ENCODE measurements at regions of chr14 and their contacts with region 1.

Region 1: DNA sequence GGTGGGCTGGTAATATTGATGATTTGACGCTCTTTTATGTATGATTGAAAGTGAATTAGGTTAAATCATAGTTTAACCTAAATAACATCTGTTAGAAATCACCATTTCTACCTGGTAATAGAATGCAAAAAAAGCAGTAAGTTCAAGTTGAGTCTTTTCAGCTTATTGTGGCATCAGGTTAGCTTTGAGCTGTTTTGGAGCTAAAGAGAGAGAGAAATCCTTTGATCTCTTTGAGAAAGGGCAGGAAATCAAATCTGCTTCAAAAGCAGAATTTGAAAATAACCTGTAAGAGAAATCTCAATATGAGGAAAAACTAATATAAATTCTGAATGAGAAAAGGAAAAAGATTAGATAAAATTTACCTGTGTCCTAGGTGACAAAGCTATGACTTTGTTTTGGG is 62.2 kb downstream of the CKB start:
- DNase-seq: no peak

Region 2: DNA sequence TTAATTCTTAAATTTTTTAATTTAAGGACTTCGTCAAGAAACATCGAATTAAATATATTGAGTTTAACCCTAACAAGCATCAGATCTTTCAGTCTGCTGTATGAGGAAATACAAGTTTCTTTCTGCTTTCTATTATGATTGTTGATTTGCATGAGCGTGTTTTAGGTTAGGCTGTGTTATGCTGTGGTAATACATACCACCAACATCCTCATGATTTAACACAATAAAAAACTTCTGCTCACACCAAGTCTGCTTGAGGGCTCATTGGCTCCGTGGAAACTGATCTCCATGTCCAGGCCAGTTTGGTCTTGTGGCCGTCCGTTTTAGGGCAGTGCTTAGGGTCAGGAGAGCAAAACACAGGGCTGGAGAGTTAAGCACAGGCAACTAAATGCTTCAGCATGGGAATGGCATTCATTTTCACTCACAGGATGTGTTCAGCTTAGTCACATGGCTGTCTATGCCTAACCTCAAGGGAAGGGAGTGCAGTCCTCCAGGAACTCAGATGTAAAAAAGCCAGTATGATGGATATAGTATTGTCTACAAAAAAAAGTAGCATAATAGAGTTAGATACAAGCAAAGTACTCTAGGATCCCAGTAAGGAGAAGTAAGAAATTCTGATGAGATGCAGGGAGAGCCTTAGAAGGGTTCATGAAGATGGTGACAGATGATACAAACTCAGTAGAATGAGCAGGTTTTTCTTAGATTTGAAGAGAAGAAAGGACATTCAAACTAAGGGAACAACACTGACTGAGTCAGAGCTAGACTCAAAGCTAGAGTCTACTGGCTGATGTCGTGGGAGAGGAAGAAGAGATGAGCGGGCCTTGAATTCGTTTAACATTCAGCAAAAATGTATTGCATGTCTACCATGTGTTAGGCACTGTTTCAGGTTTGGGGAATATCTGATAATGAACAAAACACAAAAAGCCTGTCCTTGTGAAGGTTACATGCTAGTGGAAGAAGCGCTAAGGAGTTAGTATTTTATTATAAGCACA is 58.9 kb before region 1 on chr14:
- in situ Hi-C with region 1: loop called (anchors 10 kb)
- DNase-seq: no peak

Region 3: GRCh38 chr14:103518422-103519042 is 58.1 kb after region 1 on chr14:
- in situ Hi-C with region 1: loop called (anchors 10 kb)
- DNase-seq: peak; percentile 70

Region 4: GRCh38 chr14:103546652-103547454 is 86.4 kb after region 1 on chr14:
- in situ Hi-C with region 1: no loop called
- DNase-seq: peak; percentile 94

Measured in G401 (cell line).